ENCODE measurements at regions of chr14 and their contacts with region 1.

Region 1: DNA sequence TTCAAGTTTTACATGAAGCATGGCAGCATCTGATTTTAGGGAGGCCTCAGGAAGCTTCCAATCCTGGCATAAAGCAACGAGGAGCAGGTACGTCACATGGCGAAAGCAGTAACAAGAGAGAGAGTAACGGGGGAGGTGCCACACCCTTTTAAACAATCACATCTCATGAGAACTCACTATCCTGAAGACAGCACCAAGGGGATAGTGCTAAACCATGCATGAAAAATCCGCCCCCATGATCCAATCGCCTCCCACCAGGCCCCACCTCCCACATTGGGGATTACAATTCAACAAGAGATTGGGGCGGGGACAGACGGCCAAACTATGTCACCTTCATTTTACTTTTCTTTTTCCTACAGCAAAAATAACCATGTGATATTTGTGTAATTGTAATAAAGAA is 7.2 kb upstream of the MAP3K9 start:
- DNase-seq: no peak
- H3K4me3 Mint-ChIP-seq: no peak overlapping the region
- H3K27ac Mint-ChIP-seq: no peak overlapping the region
- H3K4me1 Mint-ChIP-seq: peaks cover 26% of the 10 kb centered on the region
- H3K27me3 Mint-ChIP-seq: peaks cover 6% of the 10 kb centered on the region

Region 2: DNA sequence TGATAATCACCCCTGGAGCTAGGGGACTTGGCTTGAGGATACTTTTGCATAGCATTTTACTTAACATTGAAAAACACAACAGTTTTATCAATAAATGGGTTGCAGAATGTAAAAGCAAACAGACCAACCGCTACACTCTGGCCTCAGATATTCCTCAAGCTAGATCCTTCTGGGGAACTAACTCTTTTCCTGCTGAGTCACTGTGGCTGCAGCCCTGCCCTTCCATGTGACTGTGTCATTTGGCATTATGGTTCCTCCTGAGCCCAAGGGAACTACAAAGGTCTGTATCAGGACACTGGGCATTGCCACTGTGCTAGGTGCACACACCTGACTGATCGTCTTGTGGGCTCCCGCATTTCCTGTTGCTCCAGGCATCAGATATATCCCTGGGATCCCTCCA is 118.2 kb before region 1 on chr14:
- intact Hi-C with region 1: no loop called
- DNase-seq: no peak
- H3K4me3 Mint-ChIP-seq: no peak overlapping the region
- H3K27ac Mint-ChIP-seq: no peak overlapping the region
- H3K4me1 Mint-ChIP-seq: no peaks in the 10 kb centered on the region
- H3K27me3 Mint-ChIP-seq: peaks cover 13% of the 10 kb centered on the region

Region 3: DNA sequence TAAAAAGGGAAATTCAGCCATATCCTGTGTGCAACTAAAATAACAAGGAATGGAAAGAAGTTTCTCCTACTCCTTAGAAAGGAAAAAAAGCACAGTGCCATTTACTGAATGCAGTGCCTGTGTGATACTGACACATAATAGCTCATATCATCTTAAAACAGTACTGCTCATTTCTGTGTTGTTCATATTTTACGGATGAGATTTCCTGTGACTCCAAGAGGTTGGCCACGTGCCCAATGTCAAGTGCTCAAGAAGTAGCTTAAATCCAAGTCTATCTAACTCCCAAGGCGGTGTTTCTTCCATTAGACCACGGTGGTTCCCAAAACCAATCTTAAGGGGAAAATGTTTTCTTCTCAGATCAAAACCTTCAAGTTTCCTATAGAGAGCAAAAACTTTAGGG is 27.2 kb before region 1 on chr14:
- intact Hi-C with region 1: no loop called
- DNase-seq: no peak
- H3K4me3 Mint-ChIP-seq: no peak overlapping the region
- H3K27ac Mint-ChIP-seq: no peak overlapping the region
- H3K4me1 Mint-ChIP-seq: no peaks in the 10 kb centered on the region
- H3K27me3 Mint-ChIP-seq: no peaks in the 10 kb centered on the region

Region 4: GRCh38 chr14:70856851-70857495 is 40.4 kb after region 1 on chr14:
- intact Hi-C with region 1: no loop called
- DNase-seq: no peak
- H3K4me3 Mint-ChIP-seq: no peak overlapping the region
- H3K27ac Mint-ChIP-seq: no peak overlapping the region
- H3K4me1 Mint-ChIP-seq: peaks cover 10% of the 10 kb centered on the region
- H3K27me3 Mint-ChIP-seq: peaks cover 2% of the 10 kb centered on the region

Region 5: DNA sequence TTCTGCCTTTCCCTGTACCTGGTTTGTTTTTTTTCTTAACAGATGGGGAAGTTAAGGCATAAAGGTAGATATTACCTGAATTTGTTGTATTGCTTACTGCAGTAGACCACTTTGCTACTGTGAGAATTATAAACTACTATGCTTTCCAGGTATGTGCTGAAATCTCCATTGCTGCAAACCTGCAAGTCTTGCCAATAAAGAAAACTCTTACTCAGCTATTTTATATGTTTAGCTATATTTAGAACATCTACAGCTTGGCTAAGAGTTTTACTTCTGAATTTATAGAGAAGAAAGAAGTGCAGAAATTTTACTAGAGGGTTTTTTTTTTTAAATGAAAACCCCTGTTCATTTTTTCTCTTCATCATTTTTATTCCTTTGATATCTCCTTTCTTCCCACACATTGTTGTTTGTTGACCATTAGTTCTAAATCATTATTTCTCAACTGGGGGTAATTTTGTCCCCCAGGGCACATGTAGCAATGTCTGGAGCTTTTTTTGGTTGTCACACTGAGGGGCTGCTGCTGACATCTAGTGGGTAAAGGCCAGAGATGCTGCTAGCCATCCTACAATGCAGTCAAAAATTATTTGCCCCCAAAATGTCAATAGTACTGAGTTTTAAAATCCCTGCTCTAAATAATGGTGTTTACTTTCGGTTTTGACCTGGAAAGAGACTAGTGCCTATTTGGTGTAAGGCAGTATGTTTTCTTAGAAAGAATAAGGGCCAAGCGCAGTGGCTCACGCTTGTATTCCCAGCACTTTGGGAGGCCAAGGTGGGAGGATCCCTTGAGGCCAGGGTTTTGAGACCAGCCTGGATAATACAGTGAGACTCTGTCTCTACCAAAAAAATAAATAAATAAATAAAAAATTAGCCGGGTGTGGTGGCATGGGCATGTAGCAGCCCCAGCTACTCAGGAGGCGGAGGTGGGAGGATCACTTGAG is 139.3 kb after region 1 on chr14:
- intact Hi-C with region 1: loop called (anchors 5 kb)
- DNase-seq: no peak
- H3K4me3 Mint-ChIP-seq: no peak overlapping the region
- H3K27ac Mint-ChIP-seq: no peak overlapping the region
- H3K4me1 Mint-ChIP-seq: peaks cover 30% of the 10 kb centered on the region
- H3K27me3 Mint-ChIP-seq: no peaks in the 10 kb centered on the region